Thyroid gland (tissue), 4 donors: ENCODE measurements at regions of chr19 and their contacts with region 1.

Region 1: DNA sequence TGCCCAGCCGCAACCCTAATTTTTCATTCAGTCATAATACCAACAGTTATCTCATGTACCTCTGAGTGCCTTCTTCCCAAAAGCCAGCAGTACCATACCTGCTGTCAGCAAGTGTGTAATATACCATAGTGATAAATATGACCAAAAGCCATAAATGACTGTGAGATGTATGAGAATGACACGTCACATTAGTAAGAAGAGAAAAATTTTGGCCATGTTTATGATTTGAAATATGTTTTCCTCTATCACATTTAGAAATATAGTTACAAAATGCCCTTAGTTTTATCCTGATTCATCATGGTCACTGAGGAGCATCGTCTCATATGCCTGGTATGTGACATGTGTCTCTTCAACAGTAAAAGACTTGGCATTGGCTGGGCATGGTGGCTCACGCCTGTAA is 11.2 kb upstream of the ZNF700 start:
- DNase-seq: no peak
- H3K4me3 ChIP-seq: no peak overlapping the region
- H3K27ac ChIP-seq: no peak overlapping the region
- H3K4me1 ChIP-seq: no peaks in the 10 kb centered on the region
- H3K27me3 ChIP-seq: no peaks in the 10 kb centered on the region
- CTCF ChIP-seq: no peak
- POLR2A ChIP-seq: no peak

Region 2: DNA sequence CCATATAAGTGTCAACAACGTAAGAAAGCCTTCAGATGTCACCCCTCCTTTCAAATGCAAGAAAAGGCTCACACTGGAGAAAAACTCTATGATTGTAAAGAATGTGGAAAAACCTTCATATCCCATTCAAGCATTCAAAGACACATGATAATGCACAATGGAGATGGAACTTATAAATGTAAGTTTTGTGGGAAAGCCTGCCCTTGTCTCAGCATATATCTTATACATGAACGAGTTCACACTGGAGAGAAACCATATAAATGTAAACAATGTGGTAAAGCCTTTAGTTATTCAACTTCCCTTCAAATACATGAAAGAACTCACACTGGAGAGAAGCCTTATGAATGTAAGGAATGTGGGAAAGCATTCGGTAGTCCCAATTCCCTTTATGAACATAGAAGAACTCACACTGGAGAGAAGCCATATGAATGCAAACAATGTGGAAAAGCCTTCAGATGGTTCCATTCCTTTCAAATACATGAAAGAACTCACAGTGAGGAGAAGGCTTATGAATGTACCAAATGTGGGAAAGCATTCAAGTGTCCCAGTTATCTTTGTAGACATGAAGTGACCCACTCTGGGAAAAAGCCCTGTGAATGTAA is 162.0 kb after region 1 on chr19:
- intact Hi-C with region 1: loop called (anchors 10 kb)
- DNase-seq: no peak
- H3K4me3 ChIP-seq: no peak overlapping the region
- H3K27ac ChIP-seq: no peak overlapping the region
- H3K4me1 ChIP-seq: no peaks in the 10 kb centered on the region
- H3K27me3 ChIP-seq: no peaks in the 10 kb centered on the region
- CTCF ChIP-seq: no peak
- POLR2A ChIP-seq: no peak